ENCODE measurements at regions of chrX and their contacts with region 1.

Region 1: DNA sequence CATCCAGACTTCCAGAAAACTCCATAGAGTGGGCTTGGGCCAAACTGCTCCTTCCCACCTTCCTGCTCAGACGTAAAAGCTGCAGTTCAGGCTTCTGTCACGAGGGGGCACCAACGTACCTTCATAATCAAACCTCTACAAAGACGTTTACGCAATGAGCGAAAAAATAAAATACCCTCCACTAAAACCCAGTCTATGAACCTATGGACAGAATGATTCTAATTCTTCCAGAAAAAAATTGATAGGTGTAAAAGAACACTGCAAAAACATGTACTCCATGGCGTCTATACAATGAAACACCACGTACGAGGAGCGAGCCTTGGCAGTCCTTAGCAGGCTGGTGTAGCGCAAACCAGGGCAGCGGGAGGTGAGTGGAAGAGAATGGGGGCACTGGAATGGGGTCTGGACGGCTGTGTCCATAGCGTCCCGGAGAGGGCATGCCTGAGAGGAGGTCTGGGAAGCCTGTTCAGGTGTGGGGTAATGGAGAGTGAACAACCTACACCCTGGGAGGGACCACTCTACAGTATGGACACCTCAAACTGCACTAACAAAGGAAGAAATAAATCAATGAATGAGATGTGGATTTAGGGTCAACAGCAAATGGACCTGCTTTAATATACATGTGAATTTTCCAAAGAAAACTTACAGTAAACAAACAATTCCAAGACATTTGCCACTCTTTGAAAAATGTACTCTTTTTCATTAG is 14.4 kb upstream of the RAB40A start:
- DNase-seq: peak; percentile 83
- H3K4me3 ChIP-seq: peak overlapping the region in 2 of 4 donors; percentile 22 to 41
- H3K27ac ChIP-seq: peak overlapping the region in 1 of 4 donors; percentile 40
- H3K4me1 ChIP-seq: peaks cover 0 to 2% (median 0%) of the 10 kb centered on the region in 4 donors
- H3K27me3 ChIP-seq: no peaks in the 10 kb centered on the region
- CTCF ChIP-seq: peak; percentile 65 to 83 (median 74)
- EP300 ChIP-seq: no peak
- POLR2A ChIP-seq: no peak

Region 2: DNA sequence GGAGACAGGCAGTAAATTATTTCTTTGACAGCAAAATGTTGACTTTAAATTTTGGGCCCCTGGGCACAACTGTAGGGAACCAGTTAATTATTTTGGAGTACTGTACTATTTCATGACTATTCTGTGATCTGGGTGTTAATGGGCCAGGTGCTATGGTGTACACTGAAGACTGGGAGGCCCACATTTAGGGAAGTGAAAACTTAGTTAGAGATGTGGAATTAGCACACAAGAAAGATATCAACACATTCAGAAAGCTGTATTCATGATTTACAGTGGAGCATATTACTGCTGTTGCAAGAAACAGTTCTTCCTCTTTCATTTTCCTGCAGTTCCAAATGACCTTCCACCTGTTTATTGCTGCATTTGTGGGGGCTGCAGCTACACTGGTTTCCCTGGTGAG is 255.3 kb after region 1 on chrX:
- in situ Hi-C with region 1: loop called in 1 of 4 experiments (anchors 25 kb)
- intact Hi-C with region 1: no loop called
- DNase-seq: no peak
- H3K4me3 ChIP-seq: no peak overlapping the region
- H3K27ac ChIP-seq: no peak overlapping the region
- H3K4me1 ChIP-seq: no peaks in the 10 kb centered on the region
- H3K27me3 ChIP-seq: no peaks in the 10 kb centered on the region
- CTCF ChIP-seq: no peak
- EP300 ChIP-seq: no peak
- POLR2A ChIP-seq: no peak

Region 3: GRCh38 chrX:103817502-103817901 is 283.8 kb after region 1 on chrX:
- in situ Hi-C with region 1: loop called in 3 of 4 experiments (anchors 10 to 25 kb)
- intact Hi-C with region 1: no loop called
- DNase-seq: no peak
- H3K4me3 ChIP-seq: no peak overlapping the region
- H3K27ac ChIP-seq: no peak overlapping the region
- H3K4me1 ChIP-seq: no peaks in the 10 kb centered on the region
- H3K27me3 ChIP-seq: no peaks in the 10 kb centered on the region
- CTCF ChIP-seq: peak; percentile 53 to 93 (median 71)
- EP300 ChIP-seq: no peak
- POLR2A ChIP-seq: no peak

Region 4: DNA sequence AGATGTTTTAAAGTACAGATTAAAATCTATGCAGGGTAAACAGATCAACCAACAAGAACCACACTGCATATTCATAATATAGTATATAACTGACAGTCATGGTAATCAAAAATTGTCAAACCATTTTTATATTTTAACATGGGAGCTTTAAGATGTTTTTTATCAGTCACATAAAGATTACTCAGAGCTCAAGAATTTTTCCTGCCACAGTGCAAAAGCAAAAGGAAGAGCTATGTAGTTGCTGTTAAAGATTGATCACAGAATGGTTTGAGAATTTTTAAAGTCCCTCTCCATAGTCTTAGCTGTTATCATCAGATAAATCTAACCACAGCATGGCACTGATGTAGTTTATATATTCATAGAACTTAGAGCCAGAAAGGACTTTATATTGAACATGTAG is 289.9 kb after region 1 on chrX:
- in situ Hi-C with region 1: loop called in 3 of 4 experiments (anchors 10 to 25 kb)
- intact Hi-C with region 1: no loop called
- DNase-seq: no peak
- H3K4me3 ChIP-seq: no peak overlapping the region
- H3K27ac ChIP-seq: no peak overlapping the region
- H3K4me1 ChIP-seq: no peaks in the 10 kb centered on the region
- H3K27me3 ChIP-seq: no peaks in the 10 kb centered on the region
- CTCF ChIP-seq: no peak
- EP300 ChIP-seq: no peak
- POLR2A ChIP-seq: no peak

Measured in transverse colon (tissue), 4 donors.